ENCODE measurements at regions of chr3 and their contacts with region 1.

Region 1: DNA sequence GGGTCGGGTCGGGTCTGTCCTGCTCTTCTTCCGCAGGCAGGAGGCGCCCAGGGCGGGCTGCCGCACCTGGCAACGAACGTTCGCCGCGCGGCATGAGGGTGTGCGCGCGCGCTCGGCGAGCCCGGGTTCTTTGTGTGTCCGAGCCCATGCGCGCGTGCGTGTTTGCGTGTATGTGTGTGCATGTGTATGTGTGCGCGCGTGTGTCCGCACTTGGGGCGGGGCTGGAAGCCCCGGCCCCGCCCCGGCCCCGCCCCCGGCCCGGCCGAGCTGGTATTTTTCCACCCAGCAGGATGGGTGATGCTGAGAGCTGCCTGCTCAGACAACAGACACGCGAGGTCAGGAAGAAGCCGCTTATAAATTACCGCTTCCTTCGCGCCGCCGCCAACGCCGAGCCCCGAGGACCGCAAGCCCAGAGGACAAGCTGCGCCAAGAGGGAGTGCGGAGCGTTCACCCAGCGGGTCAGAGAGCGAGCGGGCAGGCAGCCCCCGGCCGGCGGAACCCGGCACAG is at the start of gene SLC6A6:
- DNase-seq: peak; percentile 94
- ATAC-seq: peak; percentile 88
- H3K4me3 Mint-ChIP-seq: peak within 1 kb of the TSS; percentile 97
- H3K27ac Mint-ChIP-seq: peak within 1 kb of the TSS; percentile 98
- H3K4me1 Mint-ChIP-seq: peaks cover 54% of the 10 kb centered on the region
- H3K27me3 Mint-ChIP-seq: peaks cover 3% of the 10 kb centered on the region; the same call in 1 of the 2 replicates
- CTCF ChIP-seq: no peak
- total RNA-seq, gene SLC6A6: 144 to 211 TPM (median 147 TPM) in 3 replicates

Region 2: DNA sequence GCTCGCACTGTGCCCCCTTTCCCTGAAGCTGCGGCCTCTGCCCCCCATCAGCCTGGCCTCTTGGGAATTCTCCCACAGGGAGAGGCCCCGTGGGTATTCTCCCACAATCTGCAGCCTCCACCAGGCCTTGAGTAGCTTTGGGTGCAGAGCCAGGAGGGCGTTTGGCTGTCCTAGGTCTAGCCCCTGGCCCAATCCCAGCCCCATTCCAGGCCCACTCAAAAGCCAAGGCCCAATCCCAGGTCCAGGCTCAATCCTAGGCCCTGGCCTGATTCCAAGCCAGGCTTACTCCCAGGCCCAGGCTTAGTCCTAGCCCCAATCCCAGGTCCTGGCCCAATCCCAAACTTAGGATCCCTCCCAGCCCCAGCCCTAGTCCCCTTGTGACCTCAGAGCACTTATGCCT is 337.4 kb before region 1 on chr3:
- CTCF ChIA-PET with region 1: no interaction called
- POLR2A ChIA-PET with region 1: no interaction called
- DNase-seq: no peak
- ATAC-seq: no peak
- H3K4me3 Mint-ChIP-seq: no peak overlapping the region
- H3K27ac Mint-ChIP-seq: no peak overlapping the region
- H3K4me1 Mint-ChIP-seq: no peaks in the 10 kb centered on the region
- H3K27me3 Mint-ChIP-seq: peaks cover 3% of the 10 kb centered on the region; the same call in 1 of the 2 replicates
- CTCF ChIP-seq: no peak

Region 3: GRCh38 chr3:14369675-14370669 is 32.4 kb before region 1 on chr3:
- CTCF ChIA-PET with region 1: interaction called, 13 read pairs
- POLR2A ChIA-PET with region 1: no interaction called
- DNase-seq: peak; percentile 70
- ATAC-seq: peak; percentile 95
- H3K4me3 Mint-ChIP-seq: no peak overlapping the region
- H3K27ac Mint-ChIP-seq: peak overlapping the region; percentile 19; the same call in 1 of the 2 replicates
- H3K4me1 Mint-ChIP-seq: peaks cover 51% of the 10 kb centered on the region
- H3K27me3 Mint-ChIP-seq: peaks cover 2% of the 10 kb centered on the region; the same call in 1 of the 2 replicates
- CTCF ChIP-seq: no peak

Region 4: GRCh38 chr3:14391033-14391432 is 11.3 kb before region 1 on chr3:
- CTCF ChIA-PET with region 1: interaction called, 15 read pairs
- POLR2A ChIA-PET with region 1: interaction called, 5 read pairs
- DNase-seq: no peak
- ATAC-seq: no peak
- H3K4me3 Mint-ChIP-seq: no peak overlapping the region
- H3K27ac Mint-ChIP-seq: no peak overlapping the region
- H3K4me1 Mint-ChIP-seq: peaks cover 24% of the 10 kb centered on the region
- H3K27me3 Mint-ChIP-seq: peaks cover 3% of the 10 kb centered on the region; the same call in 1 of the 2 replicates
- CTCF ChIP-seq: no peak